Cardiac septum (tissue), 1 donor: ENCODE measurements at regions of chr11 and their contacts with region 1.

Region 1: GRCh38 chr11:59542142-59542810 is 30.9 kb downstream of the OR4D9 start:
- DNase-seq: no peak

Region 2: GRCh38 chr11:59680287-59681154 is 138.2 kb after region 1 on chr11:
- intact Hi-C with region 1: loop called (anchors 1 kb)
- DNase-seq: no peak